ENCODE measurements at regions of chr18 and their contacts with region 1.

Region 1: DNA sequence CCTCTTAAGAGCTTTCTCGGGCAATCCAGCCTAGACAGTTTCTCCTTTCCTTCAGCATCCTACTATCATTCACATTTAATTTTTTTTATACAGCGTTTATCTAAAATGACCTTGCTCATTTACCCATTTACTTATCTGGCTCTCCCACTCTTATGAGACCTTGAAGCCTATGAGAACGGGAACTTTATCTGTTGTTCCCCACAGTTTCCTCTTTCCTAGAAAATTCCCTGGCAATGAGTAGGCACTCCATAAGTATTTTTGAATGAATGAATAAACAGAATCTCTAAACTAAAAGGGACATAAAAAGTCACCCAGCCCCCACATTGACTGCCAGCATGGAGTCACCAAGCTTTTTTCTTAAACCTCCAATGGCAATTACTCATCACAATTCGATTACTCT is 353.2 kb downstream of the METTL4 start:
- DNase-seq: no peak
- ATAC-seq: no peak
- H3K4me3 ChIP-seq: no peak overlapping the region
- H3K4me3 Mint-ChIP-seq: no peak overlapping the region
- H3K27ac ChIP-seq: no peak overlapping the region
- H3K27ac Mint-ChIP-seq: no peak overlapping the region
- H3K4me1 ChIP-seq: no peaks in the 10 kb centered on the region
- H3K4me1 Mint-ChIP-seq: no peaks in the 10 kb centered on the region
- H3K27me3 ChIP-seq: no peaks in the 10 kb centered on the region
- H3K27me3 Mint-ChIP-seq: peaks cover 20 to 21% of the 10 kb centered on the region in 2 donors

Region 2: GRCh38 chr18:2281523-2282199 is 63.6 kb after region 1 on chr18:
- CTCF ChIA-PET with region 1: interaction called in 1 of 2 experiments, 12 read pairs
- POLR2A ChIA-PET with region 1: no interaction called
- DNase-seq: no peak
- ATAC-seq: no peak
- H3K4me3 ChIP-seq: no peak overlapping the region
- H3K4me3 Mint-ChIP-seq: no peak overlapping the region
- H3K27ac ChIP-seq: no peak overlapping the region
- H3K27ac Mint-ChIP-seq: no peak overlapping the region
- H3K4me1 ChIP-seq: no peaks in the 10 kb centered on the region
- H3K4me1 Mint-ChIP-seq: no peaks in the 10 kb centered on the region
- H3K27me3 ChIP-seq: no peaks in the 10 kb centered on the region
- H3K27me3 Mint-ChIP-seq: peaks cover 0 to 2% of the 10 kb centered on the region in 2 donors

Measured in T-cell (primary cell).